ENCODE measurements at regions of chr1 and their contacts with region 1.

Region 1: GRCh38 chr1:58903514-58904298 is 119.9 kb upstream of the JUN start:
- DNase-seq: peak; percentile 95 to 98 (median 97)
- ATAC-seq: peak; percentile 90 to 97 (median 96)
- H3K4me3 ChIP-seq: peak overlapping the region; percentile 11 to 69 (median 60)
- H3K27ac ChIP-seq: peak overlapping the region; percentile 95 to 99 (median 97)
- H3K4me1 ChIP-seq: peaks cover 0 to 45% (median 21%) of the 10 kb centered on the region in 12 donors
- H3K27me3 ChIP-seq: no peaks in the 10 kb centered on the region
- CTCF ChIP-seq: peak in 2 of 12 donors; percentile 7 to 33
- POLR2A ChIP-seq: peak in 1 of 2 donors; percentile 90

Region 2: DNA sequence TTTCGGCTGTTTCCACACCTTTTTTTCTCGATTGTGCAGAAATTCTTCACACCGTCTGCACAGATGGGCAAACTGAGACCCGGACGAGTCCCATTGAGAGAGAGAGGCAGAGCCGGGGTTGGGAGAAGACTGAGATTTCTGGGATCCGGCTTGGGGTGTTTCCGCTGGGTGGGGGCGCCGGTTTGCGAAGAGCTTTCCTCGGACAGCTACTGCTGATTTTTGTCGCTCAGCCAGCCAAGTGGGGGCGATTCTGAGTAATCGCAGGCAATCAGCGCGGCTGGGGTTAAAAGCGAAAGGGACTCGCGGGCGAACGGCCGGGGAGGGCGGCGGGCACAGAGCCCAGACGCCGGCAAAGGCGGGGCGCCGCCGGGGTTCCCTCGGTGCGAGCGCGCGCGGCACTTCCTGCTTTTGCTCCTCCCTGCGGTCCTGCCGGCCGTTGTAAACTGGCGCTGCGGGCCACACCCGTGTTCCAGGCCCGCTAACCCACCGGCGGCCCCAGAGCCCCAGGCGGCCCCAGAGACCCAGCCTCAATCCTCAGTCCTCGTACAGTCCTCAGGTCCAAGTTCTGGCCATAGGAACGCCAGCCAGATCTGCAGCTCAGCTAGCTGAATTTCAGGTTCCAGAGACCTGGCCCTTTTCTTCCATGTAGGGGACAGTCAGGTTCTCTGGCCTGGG is 87.5 kb before region 1 on chr1:
- intact Hi-C with region 1: loop called in 6 of 10 experiments (anchors 1 to 10 kb)
- DNase-seq: peak; percentile 92 to 96 (median 94)
- ATAC-seq: peak; percentile 80 to 93 (median 90)
- H3K4me3 ChIP-seq: peak overlapping the region; percentile 32 to 71 (median 64)
- H3K27ac ChIP-seq: peak overlapping the region; percentile 87 to 96 (median 92)
- H3K4me1 ChIP-seq: peaks cover 0 to 59% (median 20%) of the 10 kb centered on the region in 12 donors
- H3K27me3 ChIP-seq: no peaks in the 10 kb centered on the region
- CTCF ChIP-seq: peak in 3 of 12 donors; percentile 19 to 30 (median 26)
- POLR2A ChIP-seq: peak in 1 of 2 donors; percentile 55

Region 3: DNA sequence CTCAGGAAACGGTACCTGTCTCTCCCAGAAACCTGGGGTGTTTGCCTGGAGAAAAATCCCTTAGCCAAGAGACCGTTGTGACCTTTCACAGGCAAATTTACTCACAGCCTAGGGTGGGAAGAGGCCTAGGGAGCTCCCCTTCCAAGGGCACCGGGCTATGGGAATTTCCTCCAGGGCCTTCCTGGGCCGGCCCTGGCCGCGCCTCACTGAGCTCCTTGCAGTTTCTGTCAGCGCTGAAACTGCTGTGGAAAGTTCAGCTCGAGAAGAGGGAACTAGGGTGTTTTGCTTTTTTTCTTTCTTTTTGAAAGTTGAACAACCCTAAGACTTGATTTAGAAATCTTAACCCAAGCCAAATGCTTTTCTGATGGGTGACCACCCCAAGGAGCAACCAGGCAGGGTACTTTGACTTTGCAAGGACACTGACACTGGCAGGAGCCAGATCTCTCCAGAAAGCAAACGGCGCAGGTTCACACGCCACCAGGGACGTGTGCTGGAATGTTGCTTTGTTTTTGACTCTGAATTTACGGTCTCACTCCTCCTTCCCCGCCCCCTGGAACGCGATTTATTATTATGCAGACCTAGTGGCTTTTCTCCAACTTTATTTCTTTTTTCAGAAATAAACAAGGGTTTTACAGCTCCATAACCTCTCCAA is 109.7 kb after region 1 on chr1:
- intact Hi-C with region 1: loop called in 3 of 10 experiments (anchors 5 to 10 kb)
- DNase-seq: peak; percentile 33 to 65 (median 46)
- ATAC-seq: peak; percentile 40 to 77 (median 69)
- H3K4me3 ChIP-seq: peak overlapping the region in 5 of 12 donors; percentile 4 to 34 (median 23)
- H3K27ac ChIP-seq: peak overlapping the region; percentile 68 to 88 (median 80)
- H3K4me1 ChIP-seq: peaks cover 6 to 51% (median 24%) of the 10 kb centered on the region in 12 donors
- H3K27me3 ChIP-seq: no peaks in the 10 kb centered on the region
- CTCF ChIP-seq: no peak
- POLR2A ChIP-seq: no peak

Region 4: DNA sequence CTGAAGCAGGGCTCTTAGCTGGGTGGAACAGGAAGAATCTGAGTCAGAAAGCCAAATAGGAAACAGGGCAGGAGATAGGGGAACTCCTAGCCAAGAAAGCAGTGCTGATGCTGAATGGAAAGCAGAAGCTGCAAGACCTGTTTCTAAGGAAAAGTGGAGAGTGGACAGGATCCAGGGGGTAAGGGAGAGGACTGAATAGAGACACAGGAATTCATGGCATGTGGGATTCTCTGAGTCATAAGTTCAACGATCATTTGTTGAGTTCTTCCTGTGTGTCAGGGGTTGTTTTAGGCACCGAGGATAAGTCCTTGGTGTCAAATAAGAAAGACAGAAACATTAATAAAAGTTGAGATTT is 239.4 kb after region 1 on chr1:
- intact Hi-C with region 1: loop called in 7 of 10 experiments (anchors 5 to 10 kb)
- DNase-seq: peak in 2 of 5 donors; percentile 23 to 41
- ATAC-seq: peak in 3 of 4 donors; percentile 25 to 43 (median 32)
- H3K4me3 ChIP-seq: no peak overlapping the region
- H3K27ac ChIP-seq: peak overlapping the region in 10 of 12 donors; percentile 2 to 91 (median 80)
- H3K4me1 ChIP-seq: peaks cover 6 to 74% (median 55%) of the 10 kb centered on the region in 12 donors
- H3K27me3 ChIP-seq: no peaks in the 10 kb centered on the region
- CTCF ChIP-seq: no peak
- POLR2A ChIP-seq: no peak

Region 5: DNA sequence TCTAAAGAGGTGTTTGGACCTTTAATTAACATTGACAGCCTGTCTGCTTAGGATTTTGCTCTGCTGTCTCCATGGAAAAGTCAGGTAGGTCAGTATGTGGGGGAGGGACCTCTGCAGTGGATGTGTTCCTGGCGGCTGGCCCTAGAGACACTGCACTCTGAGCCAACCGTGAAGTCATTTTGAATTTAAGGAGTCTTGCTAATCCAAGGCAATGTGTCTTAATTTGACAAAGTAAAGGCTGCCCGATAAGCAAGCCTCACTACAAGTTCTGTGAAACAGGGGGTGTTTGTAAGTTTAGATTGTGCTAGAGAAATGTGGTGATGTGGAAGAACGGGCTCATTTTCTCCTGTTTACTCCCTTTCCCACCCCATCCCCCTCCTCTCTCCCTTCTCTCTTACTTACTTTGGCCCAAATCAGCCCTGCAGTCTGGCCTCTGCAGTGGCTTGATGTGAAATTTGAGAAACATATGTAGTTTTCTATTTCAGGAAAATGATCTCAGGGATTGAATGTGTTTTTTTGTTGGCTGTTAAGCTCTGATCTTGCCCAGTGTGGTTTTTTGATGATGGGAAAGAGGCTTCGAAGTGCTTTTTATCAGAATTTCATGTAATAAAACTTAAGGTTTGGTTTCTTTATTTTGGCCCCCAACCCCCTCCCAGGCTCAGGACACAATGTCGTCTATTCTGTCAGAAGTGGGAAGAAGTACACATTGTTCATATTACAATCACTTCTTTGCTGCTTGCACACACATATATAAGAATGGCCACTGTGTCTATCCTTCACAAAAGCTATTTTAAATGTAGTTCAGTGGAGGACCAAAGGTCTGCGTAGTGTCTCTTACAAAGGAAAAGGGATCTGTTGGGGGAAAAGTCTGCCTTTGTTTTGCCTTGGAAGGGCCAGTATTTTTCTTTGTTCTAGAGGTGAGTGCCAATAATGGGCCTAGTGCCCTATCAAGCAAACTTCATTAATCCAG is 489.8 kb after region 1 on chr1:
- intact Hi-C with region 1: loop called in 1 of 10 experiments (anchors 10 kb)
- DNase-seq: peak; percentile 76 to 87 (median 85)
- ATAC-seq: peak; percentile 96 to 98 (median 98)
- H3K4me3 ChIP-seq: peak overlapping the region in 3 of 12 donors; percentile 4 to 10 (median 5)
- H3K27ac ChIP-seq: peak overlapping the region; percentile 67 to 95 (median 88)
- H3K4me1 ChIP-seq: peaks cover 0 to 39% (median 24%) of the 10 kb centered on the region in 12 donors
- H3K27me3 ChIP-seq: no peaks in the 10 kb centered on the region
- CTCF ChIP-seq: no peak
- POLR2A ChIP-seq: no peak

Region 6: GRCh38 chr1:59707178-59707791 is 803.6 kb after region 1 on chr1:
- intact Hi-C with region 1: loop called in 2 of 10 experiments (anchors 10 kb)
- DNase-seq: peak in 4 of 5 donors; percentile 34 to 76 (median 62)
- ATAC-seq: peak; percentile 53 to 92 (median 86)
- H3K4me3 ChIP-seq: no peak overlapping the region
- H3K27ac ChIP-seq: peak overlapping the region in 11 of 12 donors; percentile 17 to 72 (median 53)
- H3K4me1 ChIP-seq: peaks cover 0 to 60% (median 36%) of the 10 kb centered on the region in 12 donors
- H3K27me3 ChIP-seq: no peaks in the 10 kb centered on the region
- CTCF ChIP-seq: no peak
- POLR2A ChIP-seq: no peak

Region 7: GRCh38 chr1:59759156-59759925 is 855.6 kb after region 1 on chr1:
- intact Hi-C with region 1: loop called in 1 of 10 experiments (anchors 10 kb)
- DNase-seq: peak; percentile 79 to 89 (median 80)
- ATAC-seq: peak; percentile 83 to 96 (median 94)
- H3K4me3 ChIP-seq: peak overlapping the region in 9 of 12 donors; percentile 22 to 46 (median 37)
- H3K27ac ChIP-seq: peak overlapping the region in 9 of 12 donors; percentile 14 to 79 (median 53)
- H3K4me1 ChIP-seq: peaks cover 0 to 14% (median 5%) of the 10 kb centered on the region in 12 donors
- H3K27me3 ChIP-seq: no peaks in the 10 kb centered on the region
- CTCF ChIP-seq: peak; percentile 91 to 99 (median 94)
- POLR2A ChIP-seq: no peak